T-cell (primary cell): ENCODE measurements at regions of chr21 and their contacts with region 1.

Region 1: DNA sequence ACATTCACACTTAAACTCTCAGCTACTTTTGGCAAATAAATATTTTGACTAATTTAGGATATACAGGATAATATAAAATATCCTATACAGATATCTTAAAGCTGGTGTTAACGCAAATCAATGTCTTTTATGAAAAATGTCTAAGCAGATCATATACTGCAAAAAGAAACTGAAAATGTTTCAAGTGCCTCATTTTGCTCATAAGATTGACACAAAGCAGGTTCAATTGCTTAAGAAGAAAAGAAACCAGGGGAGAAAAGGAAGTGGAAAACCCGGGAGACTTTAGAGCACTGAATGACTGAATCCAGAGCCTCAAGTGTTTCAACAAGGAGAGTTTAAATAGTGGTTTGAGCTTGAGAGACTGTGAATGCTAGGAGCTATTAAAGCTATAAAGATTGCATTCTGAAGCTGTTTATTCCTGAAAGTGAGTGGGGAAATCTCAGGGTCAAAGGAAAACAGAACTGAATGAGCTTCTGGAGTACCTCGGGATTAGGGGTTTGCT is 1943.0 kb downstream of the MRPL39 start:
- DNase-seq: no peak
- ATAC-seq: no peak
- H3K4me3 ChIP-seq: no peak overlapping the region
- H3K4me3 Mint-ChIP-seq: no peak overlapping the region
- H3K27ac ChIP-seq: no peak overlapping the region
- H3K27ac Mint-ChIP-seq: no peak overlapping the region
- H3K4me1 ChIP-seq: no peaks in the 10 kb centered on the region
- H3K4me1 Mint-ChIP-seq: no peaks in the 10 kb centered on the region
- H3K27me3 ChIP-seq: no peaks in the 10 kb centered on the region
- H3K27me3 Mint-ChIP-seq: no peaks in the 10 kb centered on the region

Region 2: GRCh38 chr21:24323536-24323935 is 659.3 kb after region 1 on chr21:
- CTCF ChIA-PET with region 1: no interaction called
- POLR2A ChIA-PET with region 1: interaction called in 1 of 2 experiments, 11 read pairs
- DNase-seq: no peak
- ATAC-seq: no peak
- H3K4me3 ChIP-seq: no peak overlapping the region
- H3K4me3 Mint-ChIP-seq: no peak overlapping the region
- H3K27ac ChIP-seq: no peak overlapping the region
- H3K27ac Mint-ChIP-seq: no peak overlapping the region
- H3K4me1 ChIP-seq: no peaks in the 10 kb centered on the region
- H3K4me1 Mint-ChIP-seq: no peaks in the 10 kb centered on the region
- H3K27me3 ChIP-seq: no peaks in the 10 kb centered on the region
- H3K27me3 Mint-ChIP-seq: no peaks in the 10 kb centered on the region